SK-N-SH (cell line): ENCODE measurements at regions of chr10 and their contacts with region 1.

Region 1: DNA sequence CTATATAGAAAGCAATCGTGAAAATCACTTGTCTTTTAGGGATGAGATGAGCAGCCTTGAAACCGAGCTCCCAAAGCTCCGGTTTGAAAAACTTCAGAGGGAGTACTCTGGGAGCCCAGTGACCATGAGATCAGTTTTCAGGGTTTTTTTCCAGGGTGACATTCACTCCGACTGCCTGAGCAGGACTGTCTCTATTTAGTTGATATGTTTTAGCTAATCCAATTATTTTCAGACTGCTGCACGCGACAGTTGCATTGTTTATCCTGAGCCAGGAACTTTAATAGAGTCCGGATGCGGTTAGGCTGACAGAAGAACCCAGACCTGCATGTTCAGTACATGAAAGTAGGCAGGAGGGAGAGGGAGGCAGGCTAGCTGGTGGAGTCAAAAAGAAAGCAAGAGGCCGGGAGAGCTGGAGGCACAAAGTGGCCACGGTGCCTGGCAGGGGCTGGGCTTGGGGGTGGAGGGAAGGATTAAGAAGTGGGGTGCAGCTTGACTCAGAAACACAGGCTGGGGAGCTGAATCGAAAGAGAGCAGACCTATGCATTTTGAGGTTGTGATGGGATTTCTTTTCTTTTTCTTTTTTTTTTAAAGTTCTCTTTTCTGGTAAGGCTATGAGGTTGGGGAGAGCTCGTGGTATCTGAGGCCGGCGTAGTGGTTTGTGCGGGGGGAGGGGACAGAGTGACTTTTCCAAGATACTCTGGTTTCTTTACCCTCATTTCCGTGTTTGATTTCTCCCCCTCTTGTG is 5.6 kb downstream of the GATA3 start:
- DNase-seq: no peak
- H3K4me3 ChIP-seq: peak overlapping the region; percentile 86 to 92
- H3K27ac ChIP-seq: peak overlapping the region; percentile 96 to 98
- H3K4me1 ChIP-seq: peaks cover 19 to 60% of the 10 kb centered on the region in 2 experiments
- H3K27me3 ChIP-seq: no peaks in the 10 kb centered on the region
- CTCF ChIP-seq: no peak
- EP300 ChIP-seq: peak; percentile 28 to 85
- RAD21 ChIP-seq: peak; percentile 42

Region 2: DNA sequence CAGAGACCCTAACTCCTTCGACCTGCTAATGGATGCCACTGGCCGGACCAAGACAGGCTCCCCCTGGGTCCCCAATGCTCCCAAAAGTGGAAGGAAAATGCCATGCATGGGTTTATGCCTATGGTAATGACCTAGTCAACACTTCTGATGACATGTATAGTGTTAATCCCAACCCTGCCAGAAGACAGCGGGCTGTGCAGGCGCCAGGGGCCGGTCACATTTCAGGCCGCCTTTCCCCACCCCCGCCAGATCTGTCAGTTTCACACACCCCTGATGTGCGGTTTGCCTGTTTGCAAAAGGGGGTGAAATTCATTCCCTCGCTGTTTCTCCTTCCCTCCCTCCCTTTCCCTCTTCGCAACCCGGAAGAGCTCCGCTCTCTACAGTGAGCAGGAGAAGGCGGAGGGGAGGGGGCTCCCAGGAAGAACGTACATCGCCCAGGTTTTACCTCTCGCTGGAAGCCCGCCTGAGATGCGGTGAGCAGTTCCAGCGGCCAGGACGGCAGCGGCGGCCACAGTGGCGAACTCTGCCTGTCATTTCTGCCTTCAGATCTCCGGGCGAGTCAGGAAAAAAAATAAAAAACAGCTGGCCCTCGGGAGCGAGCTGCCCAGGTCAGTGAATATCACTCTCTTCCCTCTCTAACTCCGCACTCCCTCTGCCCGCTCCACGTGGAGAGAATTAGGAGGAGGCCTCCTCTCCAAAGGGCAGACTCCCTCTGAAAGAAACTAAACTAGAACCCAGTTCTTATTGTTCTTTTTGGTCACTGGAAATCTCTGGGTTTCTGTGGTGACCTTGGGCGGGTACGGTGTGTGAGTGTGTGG is 15.0 kb before region 1 on chr10:
- CTCF ChIA-PET with region 1: interaction called, 5 read pairs
- POLR2A ChIA-PET with region 1: interaction called, 33 read pairs
- DNase-seq: peak; percentile 87
- H3K4me3 ChIP-seq: peak overlapping the region; percentile 86 to 92
- H3K27ac ChIP-seq: peak overlapping the region; percentile 96 to 98; a peak in 3 of 4 replicates
- H3K4me1 ChIP-seq: peaks cover 8 to 18% of the 10 kb centered on the region in 2 experiments; a peak in 3 of 4 replicates
- H3K27me3 ChIP-seq: no peaks in the 10 kb centered on the region
- CTCF ChIP-seq: no peak
- EP300 ChIP-seq: 0 out of 4 replicates have a peak, but pooled peaks of 1 of the 2 experiments have one; percentile 28
- RAD21 ChIP-seq: no peak

Region 3: GRCh38 chr10:8086315-8086714 is 26.2 kb after region 1 on chr10:
- CTCF ChIA-PET with region 1: no interaction called
- POLR2A ChIA-PET with region 1: interaction called, 10 read pairs
- DNase-seq: no peak
- H3K4me3 ChIP-seq: no peak overlapping the region
- H3K27ac ChIP-seq: no peak overlapping the region
- H3K4me1 ChIP-seq: peaks cover 0 to 2% of the 10 kb centered on the region in 2 experiments; a peak in 1 of 4 replicates
- H3K27me3 ChIP-seq: no peaks in the 10 kb centered on the region
- CTCF ChIP-seq: no peak
- EP300 ChIP-seq: no peak
- RAD21 ChIP-seq: no peak

Region 4: DNA sequence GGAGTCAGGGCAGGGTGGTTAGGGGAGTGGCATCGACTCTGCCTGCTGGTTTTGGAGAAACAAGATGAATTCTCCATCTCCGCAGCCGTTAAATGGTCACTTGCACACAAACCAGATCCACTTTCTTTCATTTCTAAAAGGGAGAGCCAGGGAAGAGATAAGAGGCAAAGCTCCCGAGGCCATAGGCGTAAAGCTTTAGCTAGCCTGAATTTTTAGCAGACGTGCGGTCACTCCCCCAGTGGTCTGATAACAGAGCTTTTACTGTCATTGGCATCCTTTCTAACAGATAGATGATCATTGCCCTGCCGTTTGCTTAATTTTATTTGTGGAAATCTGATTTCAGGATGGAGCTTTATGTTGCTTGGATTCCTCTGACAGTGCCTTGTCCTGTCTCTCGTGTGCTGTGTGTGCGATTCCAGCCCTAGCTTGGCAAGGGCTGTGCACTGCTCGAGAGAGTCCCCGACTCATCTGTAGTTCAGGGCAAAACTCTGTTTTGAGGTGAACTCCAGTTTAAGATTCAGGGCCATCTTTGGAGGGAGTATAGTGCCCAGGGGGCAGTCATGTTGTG is 56.9 kb after region 1 on chr10:
- CTCF ChIA-PET with region 1: interaction called, 3 read pairs
- POLR2A ChIA-PET with region 1: interaction called, 20 read pairs
- DNase-seq: peak; percentile 81
- H3K4me3 ChIP-seq: no peak overlapping the region
- H3K27ac ChIP-seq: peak overlapping the region; percentile 18 to 96; a peak in 3 of 4 replicates
- H3K4me1 ChIP-seq: peaks cover 0 to 21% of the 10 kb centered on the region in 2 experiments; a peak in 1 of 4 replicates
- H3K27me3 ChIP-seq: no peaks in the 10 kb centered on the region
- CTCF ChIP-seq: no peak
- EP300 ChIP-seq: peak; percentile 15 to 100; a peak in 3 of 4 replicates
- RAD21 ChIP-seq: peak; percentile 54